A549 (cell line): ENCODE measurements at regions of chr14 and their contacts with region 1.

Region 1: DNA sequence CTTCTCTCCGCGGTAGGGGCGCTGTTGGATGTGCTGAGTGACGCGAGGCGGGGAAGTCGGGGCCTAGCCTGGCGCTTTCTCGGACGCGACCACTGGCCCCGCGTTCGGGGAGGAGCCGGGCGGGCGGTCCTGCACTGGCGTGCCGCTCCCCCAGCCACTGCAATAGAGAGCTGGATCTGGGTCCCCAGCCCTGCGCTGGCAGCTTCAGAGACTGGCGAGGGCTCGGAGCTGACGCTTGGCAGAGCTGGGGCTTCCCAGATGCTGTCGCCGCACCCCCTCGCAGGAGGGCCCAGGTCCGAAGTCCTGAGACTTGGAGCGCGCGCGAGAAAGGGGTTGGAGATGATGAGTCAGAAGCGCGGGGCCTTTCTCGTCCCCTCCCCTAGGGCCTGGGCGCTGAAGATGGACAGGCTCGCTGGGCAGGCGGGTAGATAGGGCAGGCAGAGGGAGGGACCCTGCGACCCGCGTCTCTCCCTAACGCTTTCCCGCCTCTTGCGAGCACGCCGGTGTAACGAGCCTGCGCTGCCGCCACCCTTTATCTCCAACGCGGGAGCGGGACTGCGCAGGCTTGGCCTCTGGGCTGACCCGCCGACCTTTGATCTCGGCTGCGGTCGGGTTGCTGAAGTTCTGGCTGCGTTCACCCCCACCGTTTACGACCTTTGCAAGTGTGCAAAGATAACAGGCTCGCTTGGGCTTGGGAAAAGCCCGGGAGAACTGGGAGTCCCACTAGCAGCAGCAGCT is 3.0 kb downstream of the TMEM253 start:
- DNase-seq: peak; percentile 93 to 98
- ATAC-seq: peak; percentile 82 to 91
- H3K4me3 ChIP-seq: peak overlapping the region; percentile 57
- H3K27ac ChIP-seq: peak overlapping the region; percentile 96 to 97
- H3K4me1 ChIP-seq: peaks cover 81% of the 10 kb centered on the region
- CTCF ChIP-seq: peak; percentile 56
- EP300 ChIP-seq: 0 out of 5 replicates have a peak, but pooled peaks of 1 of the 2 experiments have one; percentile 15
- POLR2A ChIP-seq: peak; percentile 86
- RAD21 ChIP-seq: peak; percentile 10 to 20; a peak in 1 of 5 replicates

Region 2: DNA sequence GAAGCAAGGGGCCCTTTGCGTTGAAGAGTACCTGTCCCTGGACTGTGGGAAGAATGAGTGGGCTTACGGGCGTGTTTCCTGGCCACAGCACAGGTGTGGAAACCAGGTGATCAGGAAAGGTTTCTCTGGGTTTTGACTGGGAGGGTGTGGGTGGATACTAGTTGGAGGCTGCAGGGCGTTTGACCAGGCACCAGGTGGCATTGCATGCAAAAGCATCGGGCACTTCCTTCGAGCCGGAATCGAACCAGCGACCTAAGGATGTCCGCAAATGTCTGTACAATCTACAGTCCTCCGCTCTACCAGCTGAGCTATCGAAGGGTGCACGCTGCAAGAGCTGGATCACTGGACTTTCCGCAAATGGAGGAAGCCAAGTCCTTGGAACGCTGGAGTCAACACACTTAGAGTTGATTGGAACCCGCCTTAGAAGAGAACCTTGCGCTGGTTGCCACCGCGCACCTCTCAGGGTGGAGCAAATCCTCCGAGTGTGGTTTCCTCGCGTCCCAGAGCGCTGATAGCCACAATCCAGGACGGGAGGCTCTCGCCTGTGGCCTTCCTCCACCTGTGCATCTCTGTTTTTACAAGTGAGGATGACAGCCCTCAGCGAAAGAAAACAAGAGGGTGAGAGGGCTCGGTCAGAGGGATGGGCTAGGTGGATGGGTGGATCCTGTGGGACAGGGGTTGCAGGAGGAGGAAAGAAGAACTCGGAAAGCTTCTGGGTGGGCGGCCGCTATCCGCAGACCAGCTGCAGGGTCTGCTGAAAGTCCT is 440.7 kb before region 1 on chr14:
- CTCF ChIA-PET with region 1: no interaction called
- POLR2A ChIA-PET with region 1: no interaction called
- DNase-seq: peak; percentile 74 to 99
- ATAC-seq: peak; percentile 90 to 93
- H3K4me3 ChIP-seq: peak overlapping the region; percentile 56
- H3K27ac ChIP-seq: peak overlapping the region; percentile 34 to 73
- H3K4me1 ChIP-seq: peaks cover 2% of the 10 kb centered on the region; the same call in 1 of the 3 replicates
- CTCF ChIP-seq: peak; percentile 46
- EP300 ChIP-seq: no peak
- POLR2A ChIP-seq: no peak
- RAD21 ChIP-seq: peak; percentile 57 to 71

Region 3: DNA sequence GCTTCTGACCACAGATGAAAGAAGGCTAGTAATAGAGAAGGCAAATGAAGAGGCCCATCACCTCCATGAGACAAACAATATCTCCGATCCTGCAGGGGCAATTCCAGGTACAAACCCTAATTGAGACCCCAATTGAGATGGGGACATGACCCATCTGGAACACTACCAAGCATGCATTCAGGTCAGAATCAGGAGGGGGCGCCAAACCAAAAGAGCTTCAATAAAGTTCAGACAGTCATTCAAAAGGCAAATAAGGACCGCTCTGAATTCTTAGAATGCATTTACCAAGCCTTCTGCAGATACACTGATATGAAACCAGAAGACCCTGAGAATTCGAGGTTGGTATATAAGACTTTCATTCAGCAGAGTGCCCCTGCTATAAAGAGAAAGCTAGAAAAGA is 345.9 kb before region 1 on chr14:
- CTCF ChIA-PET with region 1: no interaction called
- POLR2A ChIA-PET with region 1: no interaction called
- DNase-seq: no peak
- ATAC-seq: no peak
- H3K4me3 ChIP-seq: no peak overlapping the region
- H3K27ac ChIP-seq: no peak overlapping the region
- H3K4me1 ChIP-seq: no peaks in the 10 kb centered on the region
- CTCF ChIP-seq: peak; percentile 22; the same call in 1 of the 3 replicates
- EP300 ChIP-seq: no peak
- POLR2A ChIP-seq: no peak
- RAD21 ChIP-seq: peak in 1 of 2 experiments; percentile 20; a peak in 1 of 5 replicates

Region 4: DNA sequence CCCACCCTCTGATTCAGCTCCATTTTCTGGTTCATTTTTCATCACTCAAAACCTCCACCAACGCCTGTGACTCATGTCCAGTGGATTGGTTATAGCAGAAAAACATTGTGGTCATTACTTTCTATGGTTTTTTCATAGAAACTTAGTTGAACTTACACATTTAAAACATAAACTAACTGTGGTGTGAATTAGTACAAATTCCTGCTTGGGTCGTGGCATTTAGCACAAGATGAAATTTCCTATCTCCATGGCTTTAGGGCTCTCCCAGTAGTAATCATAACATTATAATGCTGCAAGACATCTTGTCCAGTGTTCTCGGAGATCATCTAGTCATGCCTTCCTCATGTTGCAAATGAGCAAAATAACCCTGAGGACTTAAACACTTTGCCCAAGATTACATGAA is 54.6 kb before region 1 on chr14:
- CTCF ChIA-PET with region 1: interaction called, 21 read pairs
- POLR2A ChIA-PET with region 1: no interaction called
- DNase-seq: no peak
- ATAC-seq: no peak
- H3K4me3 ChIP-seq: no peak overlapping the region
- H3K27ac ChIP-seq: no peak overlapping the region
- H3K4me1 ChIP-seq: peaks cover 2% of the 10 kb centered on the region; the same call in 1 of the 3 replicates
- CTCF ChIP-seq: no peak
- EP300 ChIP-seq: no peak
- POLR2A ChIP-seq: no peak
- RAD21 ChIP-seq: no peak

Region 5: DNA sequence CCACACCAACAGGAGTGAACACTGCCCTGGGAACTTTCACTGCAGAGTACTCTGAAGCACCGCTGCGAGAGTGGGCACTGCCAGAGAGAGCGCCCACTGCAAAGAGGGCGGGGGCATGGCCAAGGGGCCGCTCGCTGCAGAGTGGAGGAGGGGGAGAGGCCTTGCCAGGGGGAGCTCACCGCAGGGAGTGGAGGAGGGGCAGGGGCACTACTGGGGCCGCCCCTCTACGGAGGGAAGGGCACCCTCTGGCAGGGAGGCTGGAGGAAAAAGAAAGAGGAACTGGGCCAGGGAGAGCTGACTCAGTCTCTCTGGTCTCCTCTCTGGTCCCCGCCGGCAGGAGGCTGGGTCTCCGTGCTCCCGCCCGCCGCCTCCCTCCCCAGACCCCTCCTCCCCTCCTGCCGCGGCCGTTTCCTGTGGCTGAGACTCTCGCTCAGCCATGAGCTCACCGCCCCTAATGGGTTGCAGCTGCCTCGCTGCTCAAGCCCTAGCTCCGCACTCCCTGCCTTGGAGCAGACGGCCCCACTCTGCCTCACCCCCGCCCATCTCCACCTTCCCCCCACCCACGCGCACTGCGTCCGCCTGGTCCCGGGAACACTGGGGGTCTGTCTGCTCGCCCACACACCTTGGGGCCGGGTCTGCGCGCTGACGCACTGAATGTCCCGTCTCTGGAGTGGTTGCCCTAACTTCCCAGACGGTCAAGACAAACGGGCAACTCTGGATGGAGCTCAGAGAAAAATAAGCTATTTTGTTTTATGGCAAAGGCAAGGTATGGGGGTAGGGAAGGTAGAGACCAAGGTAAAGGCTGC is 32.5 kb before region 1 on chr14:
- CTCF ChIA-PET with region 1: interaction called, 369 read pairs
- POLR2A ChIA-PET with region 1: interaction called, 10 read pairs
- DNase-seq: peak; percentile 37 to 58
- ATAC-seq: peak; percentile 45 to 67
- H3K4me3 ChIP-seq: peak overlapping the region; percentile 79
- H3K27ac ChIP-seq: peak overlapping the region; percentile 83 to 95
- H3K4me1 ChIP-seq: peaks cover 23% of the 10 kb centered on the region
- CTCF ChIP-seq: no peak
- EP300 ChIP-seq: no peak
- POLR2A ChIP-seq: no peak; the same call in 1 of the 2 replicates
- RAD21 ChIP-seq: no peak

Region 6: GRCh38 chr14:21121106-21121505 is 17.2 kb after region 1 on chr14:
- CTCF ChIA-PET with region 1: interaction called, 21 read pairs
- POLR2A ChIA-PET with region 1: interaction called, 3 read pairs
- DNase-seq: no peak
- ATAC-seq: no peak
- H3K4me3 ChIP-seq: no peak overlapping the region
- H3K27ac ChIP-seq: no peak overlapping the region
- H3K4me1 ChIP-seq: no peaks in the 10 kb centered on the region
- CTCF ChIP-seq: no peak
- EP300 ChIP-seq: no peak
- POLR2A ChIP-seq: no peak
- RAD21 ChIP-seq: no peak

Region 7: DNA sequence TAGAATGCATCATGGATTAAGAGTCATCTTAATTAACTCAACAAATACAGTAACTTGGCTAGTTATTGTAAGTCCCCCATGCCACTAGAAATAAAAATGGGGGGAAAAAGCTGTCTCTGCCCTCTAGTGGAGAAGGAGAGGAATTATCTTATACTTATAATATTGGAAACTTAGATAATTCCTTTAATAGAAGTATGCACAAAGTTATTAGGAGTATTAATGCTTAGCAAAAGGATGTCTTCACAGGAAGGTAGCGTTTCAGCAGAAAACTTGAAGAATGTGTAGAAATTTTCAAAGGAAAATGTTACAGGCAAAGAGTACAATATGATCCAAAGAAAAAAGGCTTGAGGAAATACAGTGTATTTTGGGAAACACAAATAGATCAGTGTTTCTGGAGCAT is 32.1 kb after region 1 on chr14:
- CTCF ChIA-PET with region 1: interaction called, 15 read pairs
- POLR2A ChIA-PET with region 1: no interaction called
- DNase-seq: peak; percentile 20 to 50
- ATAC-seq: peak in 1 of 2 experiments; percentile 48; a peak in 1 of 6 replicates
- H3K4me3 ChIP-seq: no peak overlapping the region
- H3K27ac ChIP-seq: no peak overlapping the region
- H3K4me1 ChIP-seq: no peaks in the 10 kb centered on the region
- CTCF ChIP-seq: peak; percentile 75
- EP300 ChIP-seq: no peak
- POLR2A ChIP-seq: no peak
- RAD21 ChIP-seq: peak; percentile 43 to 50; a peak in 4 of 5 replicates

Region 8: GRCh38 chr14:21383848-21384493 is 280.1 kb after region 1 on chr14 and contains the start of gene SUPT16H:
- CTCF ChIA-PET with region 1: no interaction called
- POLR2A ChIA-PET with region 1: no interaction called
- DNase-seq: peak; percentile 80 to 95
- ATAC-seq: peak; percentile 93 to 95
- H3K4me3 ChIP-seq: peak within 1 kb of the TSS; percentile 71
- H3K27ac ChIP-seq: peak within 1 kb of the TSS; percentile 91 to 97
- H3K4me1 ChIP-seq: peaks cover 27% of the 10 kb centered on the region
- CTCF ChIP-seq: no peak
- EP300 ChIP-seq: no peak
- POLR2A ChIP-seq: peak; percentile 65
- RAD21 ChIP-seq: no peak
- polyA plus RNA-seq, gene SUPT16H: 121 and 129 TPM in 2 replicates